Dorsolateral prefrontal cortex (tissue), 120 donors: ENCODE measurements at regions of chr6 and their contacts with region 1.

Region 1: GRCh38 chr6:31901953-31902643 is at the start of gene ZBTB12:
- DNase-seq: peak; percentile 91 to 97 (median 94)
- H3K4me3 ChIP-seq: peak within 1 kb of the TSS; percentile 52 to 96 (median 72)
- H3K27ac ChIP-seq: peak within 1 kb of the TSS; percentile 70 to 99 (median 95)
- H3K27me3 ChIP-seq: no peaks in the 10 kb centered on the region
- CTCF ChIP-seq: peak in 13 of 56 donors; percentile 8 to 35 (median 17)
- total RNA-seq, gene ZBTB12: 3.7 to 13.7 (median 7.6) TPM

Region 2: DNA sequence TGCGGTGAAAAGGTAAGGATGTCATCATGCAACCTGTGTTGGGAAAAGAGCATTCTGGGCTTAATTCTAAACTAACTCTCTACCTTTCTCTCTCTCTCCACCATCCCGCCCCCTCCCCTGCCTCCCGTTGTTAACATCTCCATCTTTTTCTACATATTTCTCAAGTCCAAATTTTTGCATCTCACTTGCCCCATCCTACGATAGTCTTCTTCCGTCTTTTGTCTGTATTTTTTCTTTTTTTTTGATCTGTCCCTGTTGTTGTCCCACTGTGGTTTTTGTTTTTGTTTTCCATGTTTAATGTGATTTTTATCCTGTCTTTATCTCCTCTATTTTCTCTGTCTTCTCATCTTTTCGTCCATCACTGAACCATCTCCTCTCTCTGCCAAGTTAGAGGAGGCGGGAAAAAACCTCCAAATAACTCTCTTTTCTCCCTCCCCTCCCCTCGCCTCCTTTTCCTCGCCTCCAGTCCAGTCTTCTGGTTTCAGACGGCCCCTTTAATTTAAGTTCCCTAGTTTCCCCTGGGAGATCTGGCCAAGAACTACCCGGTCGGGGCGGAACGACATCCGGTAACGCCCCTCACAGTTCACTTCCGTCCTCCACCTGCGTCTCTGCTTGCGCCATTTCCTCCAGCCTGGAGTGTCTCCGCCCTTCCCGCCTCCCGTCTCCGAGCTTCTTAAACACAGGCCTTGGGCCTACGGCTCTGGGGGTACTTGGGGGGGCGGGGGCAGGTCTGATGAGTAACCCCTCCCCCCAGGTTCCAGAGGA is 355.0 kb before region 1 on chr6 and contains the start of gene NFKBIL1:
- intact Hi-C with region 1: loop called in 1 of 2 experiments (anchors 5 kb)
- DNase-seq: peak; percentile 91 to 98 (median 98)
- H3K4me3 ChIP-seq: peak within 1 kb of the TSS; percentile 29 to 82 (median 68)
- H3K27ac ChIP-seq: peak within 1 kb of the TSS; percentile 51 to 96 (median 90)
- H3K27me3 ChIP-seq: no peaks in the 10 kb centered on the region
- CTCF ChIP-seq: peak in 27 of 56 donors; percentile 1 to 55 (median 10)
- total RNA-seq, gene NFKBIL1: 13.8 to 27.3 (median 20.1) TPM

Region 3: GRCh38 chr6:31665501-31666336 is 236.4 kb before region 1 on chr6 and contains the start of gene CSNK2B:
- intact Hi-C with region 1: loop called in 1 of 2 experiments (anchors 5 kb)
- DNase-seq: peak; percentile 99 to 100 (median 100)
- H3K4me3 ChIP-seq: peak within 1 kb of the TSS; percentile 60 to 100 (median 89)
- H3K27ac ChIP-seq: peak within 1 kb of the TSS; percentile 75 to 98 (median 93)
- H3K27me3 ChIP-seq: no peaks in the 10 kb centered on the region
- CTCF ChIP-seq: peak in 27 of 56 donors; percentile 1 to 51 (median 21)
- total RNA-seq, gene CSNK2B: 85.2 to 151 (median 118) TPM

Region 4: GRCh38 chr6:31729515-31729978 is 172.6 kb before region 1 on chr6:
- intact Hi-C with region 1: loop called in 1 of 2 experiments (anchors 5 kb)
- DNase-seq: peak; percentile 56 to 86 (median 68)
- H3K4me3 ChIP-seq: peak overlapping the region; percentile 56 to 93 (median 75)
- H3K27ac ChIP-seq: peak overlapping the region in 58 of 59 donors; percentile 27 to 96 (median 82)
- H3K27me3 ChIP-seq: peaks cover 0 to 8% (median 0%) of the 10 kb centered on the region in 45 donors
- CTCF ChIP-seq: peak in 38 of 56 donors; percentile 4 to 79 (median 70)

Region 5: GRCh38 chr6:31806465-31807272 is 95.4 kb before region 1 on chr6 and contains the start of gene LSM2:
- intact Hi-C with region 1: loop called in 1 of 2 experiments (anchors 5 kb)
- DNase-seq: peak; percentile 93 to 98 (median 97)
- H3K4me3 ChIP-seq: peak within 1 kb of the TSS; percentile 58 to 93 (median 75)
- H3K27ac ChIP-seq: peak within 1 kb of the TSS; percentile 56 to 99 (median 95)
- H3K27me3 ChIP-seq: no peaks in the 10 kb centered on the region
- CTCF ChIP-seq: peak in 52 of 56 donors; percentile 7 to 72 (median 52)
- total RNA-seq, gene LSM2: 14.4 to 37.9 (median 25.8) TPM

Region 6: DNA sequence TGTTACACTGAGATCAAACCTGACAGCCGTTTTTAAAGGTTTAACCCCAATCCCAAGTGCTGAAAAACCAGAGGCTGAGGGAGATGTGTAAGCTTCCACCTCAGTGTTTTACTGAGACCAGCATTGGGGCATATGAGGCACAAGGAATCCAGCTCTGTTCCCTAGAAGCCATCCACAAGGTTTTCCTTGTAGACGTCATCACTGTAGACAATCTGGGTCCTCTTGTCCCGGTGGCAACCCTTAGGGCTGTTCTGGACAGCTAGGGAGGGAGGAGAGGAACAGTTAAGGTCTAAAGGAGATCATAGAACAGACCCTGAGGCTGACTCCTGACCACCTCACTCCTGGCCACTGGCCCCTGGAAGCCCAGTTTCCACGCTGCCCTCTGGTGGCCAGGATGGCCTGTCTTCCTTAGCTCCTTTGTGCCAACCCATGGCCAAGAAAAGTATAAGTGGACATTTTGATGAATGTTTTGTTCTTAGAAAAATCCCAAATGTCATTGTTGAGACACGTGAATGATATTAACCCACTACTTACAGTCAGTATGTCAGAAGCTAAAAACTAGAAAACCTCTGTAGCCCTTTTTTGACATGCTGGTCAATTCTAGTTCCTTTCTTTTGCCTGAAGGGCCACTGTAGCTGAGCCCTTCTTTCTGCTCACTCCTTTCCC is 50.2 kb after region 1 on chr6:
- intact Hi-C with region 1: loop called (anchors 2 to 5 kb)
- DNase-seq: peak in 8 of 10 donors; percentile 38 to 72 (median 50)
- H3K4me3 ChIP-seq: no peak overlapping the region
- H3K27ac ChIP-seq: peak overlapping the region in 9 of 59 donors; percentile 1 to 60 (median 32)
- H3K27me3 ChIP-seq: no peaks in the 10 kb centered on the region
- CTCF ChIP-seq: peak; percentile 41 to 82 (median 70)

Region 7: DNA sequence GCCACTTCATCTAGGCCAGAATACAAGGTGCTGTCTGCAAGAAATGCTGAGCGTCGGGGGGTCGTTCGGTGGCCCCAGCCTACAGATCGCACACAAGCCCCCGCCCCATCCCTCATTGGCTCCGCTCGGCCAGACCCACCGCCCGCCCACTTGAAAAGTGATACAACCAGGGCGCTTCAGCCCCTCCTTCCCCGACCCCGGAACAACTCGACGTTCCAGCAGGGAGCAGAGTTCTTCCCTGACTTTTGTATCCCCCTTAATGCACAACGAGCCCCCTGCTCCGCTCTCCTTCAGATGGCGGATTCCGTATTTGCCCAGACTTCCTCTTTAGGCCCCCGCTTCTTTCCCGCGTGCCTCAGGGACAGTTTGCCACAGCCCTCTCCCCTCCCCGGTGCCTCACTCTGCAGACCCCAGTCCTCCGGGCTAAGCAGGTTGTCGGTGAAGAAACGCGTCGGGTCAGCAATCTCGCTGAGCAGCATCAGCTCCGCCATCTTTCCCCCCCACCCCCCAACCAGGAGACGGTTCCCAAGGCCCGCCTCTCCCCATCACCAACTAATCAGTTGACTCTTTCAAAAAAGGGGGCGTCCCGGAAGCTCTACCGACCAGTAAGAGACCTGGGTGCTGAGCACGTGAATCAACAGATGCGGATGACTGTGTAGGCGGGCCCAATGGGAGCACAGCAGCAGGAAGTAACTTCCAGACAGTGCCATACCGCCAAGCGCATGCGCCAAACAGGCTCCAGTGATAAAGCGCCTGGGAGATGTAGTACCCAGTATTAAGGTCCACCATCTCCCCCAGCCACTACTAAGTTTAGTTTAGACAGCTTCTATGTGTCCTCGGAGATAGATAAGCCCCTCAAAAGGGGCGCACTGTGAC is 225.9 kb after region 1 on chr6 and contains the start of gene ATF6B:
- intact Hi-C with region 1: loop called in 1 of 2 experiments (anchors 5 kb)
- DNase-seq: peak; percentile 98 to 100 (median 99)
- H3K4me3 ChIP-seq: peak within 1 kb of the TSS; percentile 60 to 100 (median 93)
- H3K27ac ChIP-seq: peak within 1 kb of the TSS in 57 of 59 donors; percentile 13 to 97 (median 91)
- H3K27me3 ChIP-seq: no peaks in the 10 kb centered on the region
- CTCF ChIP-seq: peak in 16 of 56 donors; percentile 3 to 58 (median 20)
- total RNA-seq, gene ATF6B: 61.3 to 117 (median 80.7) TPM